ENCODE measurements at regions of chr19 and their contacts with region 1.

Region 1: GRCh38 chr19:45059278-45059965 is 16.9 kb downstream of the ZNF296 start:
- DNase-seq: peak; percentile 69 to 76
- H3K4me3 ChIP-seq: no peak overlapping the region
- H3K27ac ChIP-seq: no peak overlapping the region
- H3K4me1 ChIP-seq: no peaks in the 10 kb centered on the region
- H3K27me3 ChIP-seq: no peaks in the 10 kb centered on the region
- CTCF ChIP-seq: peak; percentile 99

Region 2: GRCh38 chr19:44782729-44783128 is 276.7 kb before region 1 on chr19:
- CTCF ChIA-PET with region 1: no interaction called
- POLR2A ChIA-PET with region 1: no interaction called
- intact Hi-C with region 1: loop called (anchors 5 kb)
- DNase-seq: no peak
- H3K4me3 ChIP-seq: no peak overlapping the region
- H3K27ac ChIP-seq: 0 out of 2 replicates have a peak overlapping the region, but pooled peaks have one; percentile 40
- H3K4me1 ChIP-seq: peaks cover 32% of the 10 kb centered on the region
- H3K27me3 ChIP-seq: no peaks in the 10 kb centered on the region
- CTCF ChIP-seq: no peak; the same call in 1 of the 2 replicates

Region 3: DNA sequence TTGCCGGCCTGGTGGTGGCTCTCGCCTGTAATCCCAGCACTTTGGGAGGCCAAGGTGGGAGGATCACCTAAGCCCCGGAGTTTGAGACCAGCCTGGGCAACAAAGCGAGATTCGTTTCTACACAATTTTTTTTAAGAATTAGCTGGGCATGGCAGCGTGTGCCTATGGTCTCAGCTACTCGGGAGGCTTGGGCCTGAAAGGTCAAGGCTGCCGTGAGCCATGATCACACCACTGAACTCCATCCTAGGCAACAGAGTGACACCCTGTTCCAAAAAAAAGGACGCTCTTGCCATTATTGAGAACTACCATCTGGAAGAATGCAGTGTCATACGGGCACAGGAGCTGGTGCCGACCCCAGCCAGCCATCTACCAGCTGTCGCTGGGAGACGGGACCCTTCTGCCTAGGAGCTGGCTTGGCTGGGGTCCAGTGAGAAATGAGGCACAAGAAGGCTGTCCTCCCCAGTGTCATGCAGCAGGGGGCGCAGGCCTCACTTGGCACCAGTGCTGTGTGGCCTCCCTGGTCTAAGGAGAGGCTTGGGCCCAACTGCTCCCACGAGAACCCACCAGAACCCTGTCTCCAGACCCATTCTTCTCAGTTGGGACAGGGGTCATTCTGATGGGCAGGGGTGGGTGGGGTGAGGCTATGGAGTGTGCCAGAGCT is 70.4 kb before region 1 on chr19:
- CTCF ChIA-PET with region 1: no interaction called
- POLR2A ChIA-PET with region 1: no interaction called
- intact Hi-C with region 1: loop called (anchors 2 kb)
- DNase-seq: peak; percentile 38 to 49
- H3K4me3 ChIP-seq: no peak overlapping the region
- H3K27ac ChIP-seq: no peak overlapping the region
- H3K4me1 ChIP-seq: no peaks in the 10 kb centered on the region
- H3K27me3 ChIP-seq: no peaks in the 10 kb centered on the region
- CTCF ChIP-seq: peak; percentile 78

Region 4: DNA sequence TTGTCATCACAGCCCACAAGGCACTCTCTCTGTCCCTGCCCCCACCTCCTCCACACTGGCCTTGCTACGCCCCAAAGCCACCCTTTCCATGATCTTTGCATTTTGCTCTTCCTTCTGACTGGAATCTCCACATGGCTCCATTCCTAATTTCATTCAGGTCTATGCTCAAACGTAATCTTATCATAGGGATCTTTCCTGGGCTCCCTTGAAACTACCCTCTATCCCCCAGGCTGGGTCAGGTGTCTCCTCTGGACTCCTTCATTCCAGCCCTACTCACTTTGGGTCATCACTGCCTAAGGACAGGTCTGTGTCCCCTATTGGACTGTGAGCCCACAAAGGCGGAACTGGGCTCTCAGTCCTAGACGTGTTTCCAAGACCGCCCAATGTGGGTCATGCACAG is 22.7 kb after region 1 on chr19:
- CTCF ChIA-PET with region 1: no interaction called
- POLR2A ChIA-PET with region 1: no interaction called
- intact Hi-C with region 1: no loop called
- DNase-seq: no peak
- H3K4me3 ChIP-seq: no peak overlapping the region
- H3K27ac ChIP-seq: no peak overlapping the region
- H3K4me1 ChIP-seq: peaks cover 19% of the 10 kb centered on the region
- H3K27me3 ChIP-seq: no peaks in the 10 kb centered on the region
- CTCF ChIP-seq: no peak

Measured in PC-9 (cell line).